ENCODE measurements at regions of chr9 and their contacts with region 1.

Region 1: GRCh38 chr9:133406480-133407307 is 11.1 kb downstream of the REXO4 start:
- DNase-seq: peak; percentile 76 to 81
- H3K4me3 ChIP-seq: no peak overlapping the region
- H3K4me3 Mint-ChIP-seq: no peak overlapping the region
- H3K27ac Mint-ChIP-seq: no peak overlapping the region
- H3K4me1 ChIP-seq: no peaks in the 10 kb centered on the region
- H3K4me1 Mint-ChIP-seq: no peaks in the 10 kb centered on the region
- H3K27me3 ChIP-seq: no peaks in the 10 kb centered on the region
- H3K27me3 Mint-ChIP-seq: no peaks in the 10 kb centered on the region
- CTCF ChIP-seq: peak; percentile 89 to 92

Region 2: DNA sequence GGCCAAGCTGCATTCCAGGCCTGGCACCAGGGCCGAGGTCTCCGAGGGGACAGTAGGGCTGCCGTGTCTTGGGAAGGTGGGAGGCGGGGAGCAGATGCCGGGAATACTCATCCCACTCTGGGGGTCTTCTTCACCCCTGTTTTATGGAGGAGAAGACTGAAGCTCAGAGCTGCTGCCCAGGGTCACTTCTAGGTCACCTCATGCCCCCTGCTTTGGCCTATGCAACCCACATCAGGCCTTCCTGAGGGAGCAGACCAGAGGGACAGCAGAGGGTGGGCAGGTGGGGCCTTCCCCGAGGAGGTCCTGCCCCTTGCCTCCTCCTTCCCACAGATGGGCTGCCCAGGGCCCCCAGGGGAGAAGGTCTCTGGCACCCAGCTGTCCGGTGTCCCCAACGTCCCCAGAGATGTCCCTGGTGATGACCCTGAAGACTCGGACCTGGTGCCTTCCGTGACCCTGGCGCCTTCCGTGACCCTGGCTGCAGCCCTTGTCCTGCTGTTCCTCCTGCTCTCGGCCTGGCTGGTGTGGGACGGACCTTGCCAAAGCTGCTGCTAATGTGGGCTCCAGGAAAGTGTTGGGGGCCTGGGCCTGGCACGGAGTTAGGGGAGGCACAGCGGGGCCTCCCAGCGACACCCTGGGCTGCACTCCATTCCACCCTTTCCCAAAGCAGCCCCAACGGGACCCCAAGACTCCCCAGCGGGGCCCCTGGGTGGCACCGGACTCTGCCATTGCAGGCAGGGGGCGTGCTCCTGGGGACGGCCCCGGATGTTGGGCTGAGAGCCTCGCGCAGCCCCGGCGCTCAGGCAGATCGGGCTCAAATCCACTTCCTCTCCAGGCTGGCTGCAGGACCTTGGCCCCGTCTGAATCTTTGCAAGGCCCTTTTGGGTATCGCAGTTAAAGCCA is 78.9 kb after region 1 on chr9:
- CTCF ChIA-PET with region 1: no interaction called
- POLR2A ChIA-PET with region 1: no interaction called
- intact Hi-C with region 1: loop called (anchors 1 kb)
- DNase-seq: no peak
- H3K4me3 ChIP-seq: no peak overlapping the region
- H3K4me3 Mint-ChIP-seq: no peak overlapping the region
- H3K27ac Mint-ChIP-seq: no peak overlapping the region
- H3K4me1 ChIP-seq: peaks cover 11% of the 10 kb centered on the region; the same call in 1 of the 2 replicates
- H3K4me1 Mint-ChIP-seq: peaks cover 7% of the 10 kb centered on the region
- H3K27me3 ChIP-seq: no peaks in the 10 kb centered on the region
- H3K27me3 Mint-ChIP-seq: peaks cover 3% of the 10 kb centered on the region
- CTCF ChIP-seq: no peak